Posterior vena cava (tissue), 2 donors: ENCODE measurements at regions of chr10 and their contacts with region 1.

Region 1: DNA sequence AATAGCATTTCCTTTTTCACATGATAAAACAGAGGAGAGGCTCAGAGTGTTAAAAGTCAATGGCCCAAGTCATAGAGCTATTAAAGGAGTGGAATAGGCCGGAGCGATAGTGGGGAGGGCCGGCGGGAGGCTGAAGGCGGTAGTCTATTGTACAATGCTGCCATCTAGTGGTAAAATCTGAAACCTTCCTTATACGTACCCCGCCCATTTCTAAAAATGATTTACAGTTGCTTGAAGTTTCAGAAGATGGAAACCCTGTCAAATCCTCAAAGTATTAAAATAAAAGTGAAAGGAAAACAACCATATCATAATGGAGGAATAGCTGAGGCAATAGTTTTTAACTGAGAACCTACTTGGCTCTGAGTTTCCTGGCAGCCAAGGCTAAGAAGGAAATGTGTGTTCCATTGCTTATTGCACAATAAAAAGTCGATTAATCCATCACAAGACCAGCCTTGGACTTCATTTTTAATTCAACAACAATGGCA is 209.1 kb downstream of the CCSER2 start:
- DNase-seq: no peak

Region 2: GRCh38 chr10:84264611-84265141 is 272.8 kb before region 1 on chr10:
- intact Hi-C with region 1: loop called (anchors 2 to 5 kb)
- DNase-seq: peak; percentile 89

Region 3: GRCh38 chr10:84375011-84375410 is 162.5 kb before region 1 on chr10:
- intact Hi-C with region 1: loop called (anchors 5 to 10 kb)
- DNase-seq: no peak

Region 4: GRCh38 chr10:86371691-86372090 is 1834.2 kb after region 1 on chr10:
- intact Hi-C with region 1: loop called (anchors 5 to 10 kb)
- DNase-seq: no peak

Region 5: GRCh38 chr10:86376852-86377796 is 1839.6 kb after region 1 on chr10:
- intact Hi-C with region 1: loop called (anchors 5 to 10 kb)
- DNase-seq: peak; percentile 93